ENCODE measurements at regions of chr19 and their contacts with region 1.

Region 1: GRCh38 chr19:18007044-18007916 is 690 bp upstream of the ARRDC2 start:
- DNase-seq: peak; percentile 85

Region 2: DNA sequence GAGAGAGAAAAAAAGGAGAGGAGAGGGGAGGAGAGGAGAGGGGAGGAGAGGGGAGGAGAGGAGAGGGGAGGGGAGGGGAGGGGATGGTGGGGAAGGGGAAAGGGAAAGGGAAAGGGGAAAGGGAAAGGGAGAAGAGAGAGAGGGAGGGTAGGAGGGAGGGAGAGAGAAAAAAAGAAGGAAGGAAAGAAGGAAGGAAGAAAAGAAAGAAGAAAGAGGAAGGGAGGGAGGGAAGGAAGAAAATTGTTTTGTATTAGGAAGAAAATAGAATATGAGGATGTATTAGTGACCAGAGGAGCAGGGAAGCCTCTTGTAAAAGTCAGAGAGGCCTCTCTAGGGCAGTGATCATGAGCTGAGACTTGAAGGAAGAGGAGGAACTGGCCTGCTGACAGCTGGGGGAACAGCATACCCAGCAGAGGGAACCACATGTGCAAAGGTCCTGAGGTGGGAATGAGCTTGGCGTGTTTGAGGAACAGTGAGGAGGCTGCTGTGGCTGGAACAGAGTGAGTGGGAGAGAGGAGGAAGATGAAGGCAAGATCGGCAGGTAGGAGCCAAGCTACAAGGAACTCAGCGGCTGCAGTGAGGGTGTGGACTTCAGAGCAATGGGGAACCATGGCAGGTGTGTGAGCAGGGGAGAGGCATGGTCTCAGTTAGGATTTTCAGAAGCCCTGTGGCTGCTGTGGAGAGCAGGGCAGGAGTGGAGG is 50.0 kb before region 1 on chr19:
- CTCF ChIA-PET with region 1: interaction called, 11 read pairs
- POLR2A ChIA-PET with region 1: no interaction called
- DNase-seq: no peak

Region 3: GRCh38 chr19:17981611-17982010 is 25.7 kb before region 1 on chr19:
- CTCF ChIA-PET with region 1: no interaction called
- POLR2A ChIA-PET with region 1: no interaction called
- DNase-seq: no peak

Region 4: DNA sequence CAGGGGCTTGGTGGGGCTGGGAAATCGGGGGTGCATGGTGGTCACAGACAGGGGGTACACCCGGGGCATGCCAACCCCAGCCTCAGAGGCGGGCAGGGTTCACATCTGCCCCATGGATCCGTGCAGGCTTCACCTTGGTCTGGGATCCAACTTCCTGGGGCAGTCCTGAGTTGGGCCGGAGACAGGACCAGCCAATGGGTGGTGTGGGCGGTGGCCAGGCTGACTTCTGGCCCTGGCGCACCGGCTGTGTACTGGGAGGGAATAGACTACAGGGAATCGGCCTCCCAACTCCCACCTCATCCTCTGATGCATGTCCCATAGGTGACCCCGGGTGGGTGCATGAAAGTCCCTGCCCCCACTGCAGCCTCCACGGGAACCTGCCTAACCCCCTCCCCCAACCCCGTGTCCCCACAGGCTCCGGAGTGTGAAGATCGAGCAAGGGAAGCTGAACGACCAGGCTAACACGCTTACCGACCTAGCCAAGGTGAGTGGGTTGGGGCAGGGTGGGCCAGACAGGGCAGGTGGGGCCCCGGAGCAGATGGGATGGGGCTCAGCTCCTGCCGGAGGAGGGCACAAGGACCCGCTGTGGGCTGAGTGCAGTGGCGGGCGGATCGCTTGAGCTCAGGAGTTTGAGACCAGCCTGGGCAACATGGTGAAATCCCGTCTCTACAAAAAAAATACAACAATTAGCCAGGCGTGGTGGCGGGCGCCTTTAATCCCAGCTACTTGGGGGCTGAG is 14.0 kb before region 1 on chr19:
- CTCF ChIA-PET with region 1: no interaction called
- POLR2A ChIA-PET with region 1: no interaction called
- DNase-seq: no peak